BJ (cell line): ENCODE measurements at regions of chr11 and their contacts with region 1.

Region 1: GRCh38 chr11:20197881-20198280 is 37.6 kb upstream of the DBX1 start:
- DNase-seq: no peak
- H3K4me3 ChIP-seq: no peak overlapping the region
- H3K27me3 ChIP-seq: peaks cover 4% of the 10 kb centered on the region
- CTCF ChIP-seq: no peak

Region 2: DNA sequence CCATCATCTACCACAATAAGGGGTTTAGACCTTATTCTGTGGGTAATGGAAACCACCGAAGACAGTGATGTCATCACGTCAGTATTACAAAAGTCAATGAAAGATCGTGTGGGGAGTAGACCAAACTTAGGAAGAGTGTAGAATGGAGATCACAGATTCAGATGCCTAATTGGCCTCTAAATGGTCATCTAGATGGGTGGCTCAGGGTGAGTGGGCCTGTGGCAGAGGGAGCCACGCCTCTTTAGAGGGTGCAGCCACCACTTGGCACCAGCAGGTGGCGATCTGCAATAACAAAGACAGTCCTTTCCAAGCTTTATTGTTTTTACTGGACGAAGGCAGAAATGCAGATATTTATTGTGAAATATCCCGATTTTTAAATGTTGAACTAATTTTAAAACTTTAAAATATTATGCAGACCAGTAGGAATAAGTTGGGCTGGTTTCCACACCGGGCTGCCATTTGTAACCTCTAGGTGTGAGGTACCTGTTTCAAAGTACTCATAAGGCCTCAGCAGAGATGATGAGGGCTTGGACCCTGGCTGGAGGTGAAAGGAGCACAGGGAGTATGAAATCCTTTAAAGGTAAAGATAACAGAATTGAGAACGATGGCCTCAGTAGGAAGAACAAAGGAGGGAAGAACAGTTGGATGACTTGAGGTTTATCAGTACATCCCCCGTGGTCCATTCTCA is 259.6 kb before region 1 on chr11:
- CTCF ChIA-PET with region 1: no interaction called
- POLR2A ChIA-PET with region 1: interaction called, 12 read pairs
- DNase-seq: no peak
- H3K4me3 ChIP-seq: no peak overlapping the region
- H3K27me3 ChIP-seq: no peaks in the 10 kb centered on the region
- CTCF ChIP-seq: peak; percentile 77